PC-9 (cell line): ENCODE measurements at regions of chr12 and their contacts with region 1.

Region 1: DNA sequence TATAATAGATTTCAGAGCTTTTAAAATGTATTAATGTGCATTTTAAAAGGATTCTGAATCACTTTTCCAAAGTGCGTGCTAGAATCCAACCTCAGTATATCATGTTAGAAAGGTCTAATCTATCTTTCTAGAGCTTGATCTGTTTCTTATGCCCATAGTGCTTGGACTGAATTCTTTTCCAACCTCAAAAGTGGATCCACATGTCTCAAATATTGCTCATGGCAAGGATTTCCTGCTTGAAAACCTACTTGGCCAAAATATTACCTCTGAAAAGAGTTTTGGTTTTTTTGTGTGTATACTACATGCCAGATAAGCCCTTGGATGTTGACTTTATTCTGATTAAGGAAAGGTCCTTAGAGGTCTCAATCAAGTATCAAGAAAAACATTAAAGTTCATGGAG is 16.9 kb upstream of the SLC6A15 start:
- DNase-seq: no peak
- H3K4me3 ChIP-seq: no peak overlapping the region
- H3K27ac ChIP-seq: no peak overlapping the region
- H3K4me1 ChIP-seq: no peaks in the 10 kb centered on the region
- H3K27me3 ChIP-seq: no peaks in the 10 kb centered on the region
- CTCF ChIP-seq: no peak

Region 2: GRCh38 chr12:84619113-84619512 is 310.4 kb before region 1 on chr12:
- CTCF ChIA-PET with region 1: no interaction called
- POLR2A ChIA-PET with region 1: interaction called, 16 read pairs
- intact Hi-C with region 1: no loop called
- DNase-seq: no peak
- H3K4me3 ChIP-seq: no peak overlapping the region
- H3K27ac ChIP-seq: no peak overlapping the region
- H3K4me1 ChIP-seq: no peaks in the 10 kb centered on the region
- H3K27me3 ChIP-seq: no peaks in the 10 kb centered on the region
- CTCF ChIP-seq: peak; percentile 60

Region 3: DNA sequence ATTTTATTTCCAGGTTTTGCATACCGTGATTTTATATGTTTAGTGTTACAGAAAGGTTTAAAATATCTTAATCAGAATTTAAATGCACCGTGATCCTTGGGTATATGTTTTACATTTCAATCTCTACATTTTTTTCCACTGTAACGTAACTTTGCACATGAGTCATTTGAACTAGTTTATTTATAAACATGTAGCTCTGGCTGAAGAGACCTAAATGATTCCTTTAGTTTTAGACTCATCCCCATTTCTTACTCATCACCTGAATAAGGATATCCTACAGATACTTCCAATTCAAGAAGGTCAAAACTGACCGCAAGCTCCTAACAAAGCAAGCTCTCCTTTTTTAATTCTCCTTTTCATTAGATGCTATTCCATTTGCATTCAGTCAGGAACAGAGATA is 25.8 kb after region 1 on chr12:
- CTCF ChIA-PET with region 1: no interaction called
- POLR2A ChIA-PET with region 1: no interaction called
- intact Hi-C with region 1: no loop called
- DNase-seq: no peak
- H3K4me3 ChIP-seq: no peak overlapping the region
- H3K27ac ChIP-seq: no peak overlapping the region
- H3K4me1 ChIP-seq: no peaks in the 10 kb centered on the region
- H3K27me3 ChIP-seq: no peaks in the 10 kb centered on the region
- CTCF ChIP-seq: no peak